ENCODE measurements at regions of chr4 and their contacts with region 1.

Region 1: GRCh38 chr4:85672116-85672515 is 197.2 kb downstream of the ARHGAP24 start:
- DNase-seq: no peak
- CTCF ChIP-seq: no peak

Region 2: GRCh38 chr4:85686398-85686797 is 14.3 kb after region 1 on chr4:
- CTCF ChIA-PET with region 1: interaction called, 20 read pairs
- POLR2A ChIA-PET with region 1: no interaction called
- DNase-seq: no peak
- CTCF ChIP-seq: no peak

Region 3: DNA sequence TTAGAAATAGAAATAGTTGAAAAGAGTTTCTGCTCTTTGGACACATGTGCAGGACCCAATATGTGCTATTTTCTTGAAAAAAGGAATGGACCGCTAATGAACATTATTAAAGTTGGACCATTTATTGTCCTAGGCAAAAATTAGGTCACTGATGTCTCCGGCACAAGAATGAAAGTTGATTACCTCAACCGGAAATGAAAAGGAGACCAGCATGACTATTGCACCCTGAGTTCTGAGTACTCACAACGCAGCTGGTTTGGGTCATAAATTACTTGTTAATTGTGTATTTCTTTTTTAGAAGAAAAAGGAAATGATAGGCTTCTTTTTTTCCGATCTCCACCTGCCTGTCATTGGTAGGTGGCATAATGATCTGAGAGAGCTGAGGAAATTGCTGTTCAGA is 35.5 kb after region 1 on chr4:
- CTCF ChIA-PET with region 1: no interaction called
- POLR2A ChIA-PET with region 1: no interaction called
- DNase-seq: no peak
- CTCF ChIP-seq: no peak

Region 4: GRCh38 chr4:85807247-85807950 is 135.3 kb after region 1 on chr4:
- CTCF ChIA-PET with region 1: no interaction called
- POLR2A ChIA-PET with region 1: no interaction called
- DNase-seq: no peak
- CTCF ChIP-seq: no peak

Region 5: DNA sequence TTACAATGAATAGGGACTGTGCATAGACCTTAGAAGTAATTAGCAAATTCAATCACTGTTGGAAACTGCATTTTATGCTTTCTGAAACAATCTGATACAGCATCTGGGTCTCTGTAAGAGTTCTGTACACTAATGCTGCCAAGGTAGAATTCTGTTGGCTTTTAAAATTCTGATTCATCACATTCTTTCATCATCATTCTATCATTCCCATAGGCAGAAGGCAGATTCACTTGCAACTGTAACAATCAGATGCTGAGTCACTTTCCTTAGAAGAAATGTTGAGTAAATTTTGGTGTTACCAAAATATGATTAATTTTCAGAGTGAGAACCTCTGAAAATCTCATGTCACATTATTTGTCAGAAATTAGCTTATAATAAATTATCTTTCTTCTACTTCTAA is 420.6 kb after region 1 on chr4:
- CTCF ChIA-PET with region 1: no interaction called
- POLR2A ChIA-PET with region 1: no interaction called
- DNase-seq: no peak
- CTCF ChIP-seq: no peak

Region 6: GRCh38 chr4:87422104-87423052 is 1750.3 kb after region 1 on chr4 and contains the start of gene NUDT9:
- CTCF ChIA-PET with region 1: no interaction called
- POLR2A ChIA-PET with region 1: no interaction called
- DNase-seq: peak; percentile 87
- CTCF ChIP-seq: no peak